ENCODE measurements at regions of chr14 and their contacts with region 1.

Region 1: DNA sequence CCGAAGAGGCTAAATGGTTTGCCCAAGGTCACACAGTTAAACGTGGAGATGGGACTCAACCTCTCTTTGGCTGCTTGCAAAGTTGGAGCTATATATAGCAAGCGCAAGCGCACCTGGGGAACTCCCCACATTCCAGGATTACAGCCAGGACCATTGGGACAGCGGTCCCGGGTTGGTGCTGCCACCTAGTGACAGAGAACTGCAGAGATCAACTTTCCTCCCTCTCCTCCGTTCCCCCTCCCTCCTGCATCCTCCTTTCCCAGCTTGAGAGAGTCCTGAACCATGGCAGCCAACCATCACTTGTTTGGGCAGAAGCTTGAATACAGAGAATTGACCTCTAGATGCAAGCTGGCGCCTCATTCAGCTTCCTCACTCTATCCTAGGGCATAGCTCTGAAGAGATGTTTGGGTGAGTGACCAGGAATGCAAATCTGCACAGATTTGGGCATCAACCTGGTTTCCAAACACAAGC is 17.4 kb upstream of the FLVCR2 start:
- DNase-seq: peak; percentile 93
- ATAC-seq: peak; percentile 92
- H3K4me3 ChIP-seq: no peak overlapping the region
- H3K27ac ChIP-seq: no peak overlapping the region
- H3K4me1 ChIP-seq: peaks cover 18% of the 10 kb centered on the region
- H3K27me3 ChIP-seq: no peaks in the 10 kb centered on the region
- CTCF ChIP-seq: peak; percentile 89

Region 2: GRCh38 chr14:75132382-75133086 is 428.5 kb before region 1 on chr14:
- CTCF ChIA-PET with region 1: no interaction called
- POLR2A ChIA-PET with region 1: no interaction called
- intact Hi-C with region 1: loop called (anchors 5 kb)
- DNase-seq: peak; percentile 93
- ATAC-seq: peak; percentile 89
- H3K4me3 ChIP-seq: no peak overlapping the region
- H3K27ac ChIP-seq: no peak overlapping the region
- H3K4me1 ChIP-seq: no peaks in the 10 kb centered on the region
- H3K27me3 ChIP-seq: no peaks in the 10 kb centered on the region
- CTCF ChIP-seq: peak; percentile 86